Prostate gland (tissue), 2 donors: ENCODE measurements at regions of chr17 and their contacts with region 1.

Region 1: DNA sequence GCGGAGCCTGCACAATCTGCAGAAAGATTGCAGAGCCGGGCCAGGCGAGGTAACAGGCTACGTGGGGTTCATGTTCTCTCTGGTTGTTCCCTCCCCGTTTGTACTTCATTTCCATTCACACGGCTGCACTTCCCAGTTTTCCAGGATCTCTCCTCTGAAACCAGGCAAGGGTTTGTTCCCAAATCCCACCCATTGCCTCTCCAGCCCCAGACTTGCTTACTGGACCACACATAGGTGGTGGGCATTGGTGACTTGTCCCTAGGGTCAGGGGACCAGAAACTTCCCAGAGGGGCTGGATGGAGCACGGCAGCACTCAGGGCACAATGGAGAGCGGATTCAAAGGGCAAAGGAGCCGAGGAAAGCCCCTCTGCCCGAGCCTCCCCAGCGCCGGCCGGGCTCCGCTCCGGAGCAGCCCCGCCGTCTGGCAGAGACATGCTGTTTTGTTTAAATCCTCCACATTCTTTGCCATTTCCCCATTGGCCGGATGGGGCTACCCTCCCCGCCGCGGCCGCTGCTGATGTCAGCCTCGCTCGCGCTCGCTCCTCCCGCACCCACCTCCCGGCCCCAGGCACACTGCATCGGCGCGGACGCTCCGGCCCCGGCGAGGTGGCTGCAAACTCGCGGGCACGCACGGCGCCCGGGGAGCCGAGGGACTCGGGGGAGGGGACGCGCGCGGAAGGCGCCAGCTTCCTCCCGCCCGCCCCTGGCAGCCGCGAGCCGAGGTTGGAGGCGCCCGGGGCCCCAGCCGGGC is at the start of gene PITPNC1:
- DNase-seq: peak; percentile 87
- H3K4me3 ChIP-seq: peak within 1 kb of the TSS; percentile 69 to 79
- H3K27ac ChIP-seq: peak within 1 kb of the TSS; percentile 90 to 94
- H3K4me1 ChIP-seq: peaks cover 9% of the 10 kb centered on the region
- H3K27me3 ChIP-seq: no peaks in the 10 kb centered on the region
- CTCF ChIP-seq: peak in 3 of 4 experiments; percentile 7 to 50 (median 42)
- POLR2A ChIP-seq: peak; percentile 86
- total RNA-seq, gene PITPNC1: 10.1 to 12.9 TPM

Region 2: DNA sequence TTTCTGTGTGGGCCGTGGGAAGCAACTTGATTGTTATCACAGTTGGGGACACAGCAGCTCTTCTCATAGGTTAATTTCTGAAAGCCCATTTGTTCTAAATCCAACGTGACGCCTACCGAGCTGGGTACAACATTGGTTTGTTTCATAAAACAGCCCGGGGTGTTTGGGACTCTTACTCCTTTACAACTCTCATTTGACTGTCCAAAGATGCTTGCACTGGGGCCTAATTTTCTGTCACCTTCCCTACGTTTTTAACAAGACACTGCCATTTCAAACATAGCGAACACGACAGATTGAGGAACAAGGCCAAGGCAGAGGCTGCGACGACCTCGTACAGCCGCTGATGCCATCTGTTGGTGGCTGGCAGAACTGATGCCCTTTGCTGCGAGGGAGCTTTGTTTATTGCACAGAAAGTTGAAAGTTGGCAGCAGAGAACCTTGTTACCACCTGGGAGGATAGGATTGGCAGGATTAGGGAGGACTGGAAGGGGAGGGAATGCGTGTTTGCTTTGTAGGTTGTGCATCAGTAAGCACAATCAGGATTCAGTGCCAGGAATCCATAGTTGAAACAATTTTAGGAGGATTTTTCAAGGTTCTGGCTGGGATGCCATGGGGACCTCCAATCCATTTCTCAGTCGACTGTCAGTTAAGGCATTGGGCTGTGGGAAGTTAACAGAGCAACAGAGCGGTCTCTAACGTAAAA is 98.5 kb after region 1 on chr17:
- intact Hi-C with region 1: loop called (anchors 2 kb)
- DNase-seq: peak; percentile 85
- H3K4me3 ChIP-seq: no peak overlapping the region
- H3K27ac ChIP-seq: peak overlapping the region in 1 of 2 donors; percentile 50
- H3K4me1 ChIP-seq: no peaks in the 10 kb centered on the region
- H3K27me3 ChIP-seq: no peaks in the 10 kb centered on the region
- CTCF ChIP-seq: peak; percentile 27 to 93 (median 86)
- POLR2A ChIP-seq: no peak

Region 3: GRCh38 chr17:67629971-67630320 is 253.0 kb after region 1 on chr17:
- intact Hi-C with region 1: loop called (anchors 2 kb)
- DNase-seq: no peak
- H3K4me3 ChIP-seq: no peak overlapping the region
- H3K27ac ChIP-seq: peak overlapping the region; percentile 35 to 42
- H3K4me1 ChIP-seq: no peaks in the 10 kb centered on the region
- H3K27me3 ChIP-seq: no peaks in the 10 kb centered on the region
- CTCF ChIP-seq: peak in 3 of 4 experiments; percentile 26 to 61 (median 46)
- POLR2A ChIP-seq: no peak

Region 4: GRCh38 chr17:67689534-67690177 is 312.7 kb after region 1 on chr17:
- intact Hi-C with region 1: loop called (anchors 5 kb)
- DNase-seq: peak; percentile 74
- H3K4me3 ChIP-seq: no peak overlapping the region
- H3K27ac ChIP-seq: no peak overlapping the region
- H3K4me1 ChIP-seq: no peaks in the 10 kb centered on the region
- H3K27me3 ChIP-seq: no peaks in the 10 kb centered on the region
- CTCF ChIP-seq: peak; percentile 42 to 90 (median 87)
- POLR2A ChIP-seq: no peak

Region 5: DNA sequence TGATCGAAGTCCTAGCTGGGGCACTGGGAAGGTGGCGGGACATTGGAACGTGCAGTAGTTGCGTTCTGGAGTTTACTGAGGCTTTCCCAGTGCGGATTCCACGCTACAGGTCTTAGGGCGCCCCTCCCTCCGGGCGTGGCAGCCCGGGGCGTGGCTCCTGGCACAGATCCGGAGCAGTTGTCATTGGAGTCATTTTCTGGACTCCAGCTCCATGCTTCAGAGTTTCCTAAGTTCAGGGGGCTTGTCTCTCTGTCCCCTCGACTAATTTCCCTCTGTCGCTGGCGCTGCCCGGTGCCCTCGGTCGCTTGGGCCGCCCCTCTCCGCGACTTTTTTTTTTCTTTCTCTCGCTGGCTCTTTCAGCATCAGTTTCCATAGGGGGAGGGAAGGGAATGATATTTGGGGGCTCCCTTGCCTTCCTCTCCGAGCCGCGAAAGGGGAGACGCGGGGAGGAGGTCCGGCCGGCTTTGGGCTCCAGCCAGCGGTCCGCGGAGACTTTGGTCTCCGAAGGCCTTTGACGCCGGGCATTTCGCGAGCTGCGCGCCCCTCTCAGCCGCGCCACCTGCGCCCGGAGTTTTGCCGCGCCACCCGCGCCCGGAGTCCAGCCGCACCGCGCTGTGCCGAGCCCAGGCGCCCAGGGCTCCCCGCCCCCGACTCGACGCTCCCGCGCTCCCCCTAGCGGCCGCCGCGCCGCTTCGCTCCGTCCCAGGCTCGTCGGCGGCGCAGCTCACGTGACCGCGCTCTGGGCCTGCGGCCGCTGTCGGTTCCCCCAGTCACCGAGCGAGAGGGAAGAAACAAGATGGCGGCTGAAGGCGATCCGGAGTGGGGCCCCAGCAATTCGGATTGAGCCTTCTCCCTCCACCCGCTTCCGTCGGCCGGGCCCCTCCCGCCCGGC is 448.1 kb after region 1 on chr17 and contains the start of gene BPTF:
- intact Hi-C with region 1: loop called (anchors 10 kb)
- DNase-seq: peak; percentile 87
- H3K4me3 ChIP-seq: peak within 1 kb of the TSS; percentile 81 to 86
- H3K27ac ChIP-seq: peak within 1 kb of the TSS; percentile 96 to 97
- H3K4me1 ChIP-seq: no peaks in the 10 kb centered on the region
- H3K27me3 ChIP-seq: no peaks in the 10 kb centered on the region
- CTCF ChIP-seq: peak; percentile 91 to 99 (median 96)
- POLR2A ChIP-seq: peak; percentile 77
- total RNA-seq, gene BPTF: 70.5 to 138 TPM